ENCODE measurements at regions of chr18 and their contacts with region 1.

Region 1: DNA sequence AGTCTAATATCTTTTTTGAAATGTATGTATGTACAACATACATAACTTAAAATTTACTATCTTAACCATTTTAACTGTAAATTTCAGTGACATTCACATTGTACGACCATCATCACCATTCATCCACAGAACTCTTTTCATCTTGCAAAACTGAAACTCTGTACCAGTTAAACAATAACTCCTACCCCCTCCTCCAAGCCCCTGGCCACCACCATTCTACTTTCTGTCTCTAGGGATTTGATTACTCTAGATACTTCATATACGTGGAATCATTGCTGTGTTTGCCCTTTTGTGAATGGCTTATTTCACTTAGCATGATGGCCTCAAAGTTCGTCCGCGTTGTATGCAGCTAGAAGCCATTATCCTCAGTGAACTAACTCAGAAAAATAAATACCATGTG is 217.0 kb downstream of the METTL4 start:
- DNase-seq: no peak
- ATAC-seq: no peak

Region 2: DNA sequence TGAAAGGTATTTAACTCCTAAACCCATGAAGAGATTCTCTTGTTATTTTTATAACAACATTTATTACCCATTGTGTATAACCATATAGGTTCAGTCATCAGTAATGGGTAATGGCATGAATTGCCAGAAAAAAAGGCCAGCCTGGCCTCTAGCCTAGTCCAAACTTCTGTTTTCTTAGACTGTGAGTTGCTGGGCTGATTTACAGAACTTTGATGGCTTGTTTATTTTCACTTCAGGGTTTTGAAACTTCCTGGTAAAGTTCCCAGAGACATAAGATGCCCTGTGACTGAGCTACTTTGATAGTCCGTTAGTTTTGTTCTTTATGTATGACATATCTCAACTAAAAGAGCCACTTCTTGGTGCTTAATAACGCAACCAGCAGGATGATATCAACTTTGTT is 52.3 kb after region 1 on chr18:
- intact Hi-C with region 1: no loop called
- DNase-seq: no peak
- ATAC-seq: no peak

Region 3: DNA sequence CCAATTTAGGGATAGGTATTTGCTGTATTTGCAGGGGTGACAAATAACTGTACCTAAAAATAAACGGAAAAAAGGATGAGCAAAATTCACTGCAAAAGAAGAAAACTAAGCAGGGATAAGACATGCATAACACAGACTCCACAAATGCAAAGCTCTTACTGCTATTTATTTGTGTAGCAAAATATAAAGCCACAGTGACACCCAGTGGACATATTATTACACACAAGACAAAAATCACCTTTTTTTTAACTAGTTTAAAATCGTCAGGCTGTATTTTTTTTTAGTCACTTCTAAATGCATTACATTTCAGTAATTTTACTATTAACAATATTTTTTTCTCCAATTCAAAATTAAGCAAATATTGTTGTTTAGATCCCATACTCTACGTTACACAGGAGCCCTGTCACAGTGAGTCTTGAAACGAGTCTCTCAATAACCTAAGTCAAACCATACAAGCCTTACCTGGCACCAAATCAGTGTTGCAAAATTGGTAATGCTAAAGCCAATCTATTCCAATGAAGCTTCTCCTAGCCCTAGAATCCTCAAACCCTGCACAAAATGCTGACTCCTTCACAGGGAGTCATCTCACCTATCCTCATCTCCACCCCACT is 193.3 kb after region 1 on chr18:
- intact Hi-C with region 1: loop called in 1 of 2 experiments (anchors 10 kb)
- DNase-seq: no peak
- ATAC-seq: peak; percentile 68